Vagina (tissue), 2 donors: ENCODE measurements at regions of chr15 and their contacts with region 1.

Region 1: GRCh38 chr15:77944002-77944867 is 133.3 kb downstream of the TBC1D2B start:
- DNase-seq: no peak
- H3K4me3 ChIP-seq: peak overlapping the region; percentile 47 to 56
- H3K27ac ChIP-seq: peak overlapping the region; percentile 80
- H3K4me1 ChIP-seq: no peaks in the 10 kb centered on the region
- H3K27me3 ChIP-seq: no peaks in the 10 kb centered on the region
- CTCF ChIP-seq: no peak
- POLR2A ChIP-seq: no peak

Region 2: DNA sequence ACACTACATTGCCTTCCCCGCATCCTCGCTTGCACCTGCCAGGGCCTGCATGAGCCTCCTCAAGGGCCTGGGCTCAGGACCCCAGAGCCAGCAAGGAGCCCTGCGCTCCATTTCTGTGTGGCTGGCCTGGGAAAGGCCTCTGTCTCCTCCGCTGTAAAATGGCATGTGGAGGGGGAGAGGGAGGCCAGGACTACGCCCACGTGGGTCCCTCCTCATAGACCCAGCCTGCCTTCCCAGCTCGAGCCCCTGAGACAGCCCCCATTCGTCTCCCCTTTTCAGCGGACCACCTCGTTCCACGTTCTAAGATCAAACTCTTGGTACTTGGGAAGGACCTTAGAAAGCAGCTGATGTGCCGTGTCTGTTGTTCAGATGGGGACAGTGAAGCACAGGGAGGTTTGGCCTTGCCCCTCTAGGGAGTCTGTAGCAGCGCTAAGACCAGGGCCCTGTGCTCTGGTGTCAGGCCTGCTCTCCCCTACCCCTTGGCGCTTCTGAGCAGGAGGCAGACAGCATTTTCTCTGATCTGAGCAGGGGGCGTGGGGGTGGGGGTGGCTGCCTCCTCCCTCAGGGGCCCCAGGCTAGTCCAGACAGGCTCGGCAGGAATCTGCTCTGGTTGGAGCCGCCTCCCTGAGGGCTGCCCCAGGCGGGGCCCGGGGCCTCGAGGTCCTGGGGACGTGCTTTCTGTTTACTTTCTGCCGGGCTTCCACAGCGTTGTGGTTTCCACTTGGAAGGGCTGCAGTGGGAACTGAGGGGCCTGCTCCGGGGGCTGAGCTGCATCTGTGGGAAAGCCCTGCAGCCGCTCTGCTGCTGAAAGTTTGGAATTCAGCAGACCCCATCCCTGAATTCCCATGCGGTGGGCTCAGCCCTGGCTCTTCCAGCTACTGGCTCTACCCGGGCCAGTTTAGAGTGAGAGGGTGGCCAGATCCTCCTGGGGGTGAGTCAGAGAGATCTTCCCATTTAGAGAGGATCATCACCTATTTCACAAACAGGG is 417.1 kb before region 1 on chr15:
- intact Hi-C with region 1: no loop called
- DNase-seq: no peak
- H3K4me3 ChIP-seq: no peak overlapping the region
- H3K27ac ChIP-seq: peak overlapping the region; percentile 60
- H3K4me1 ChIP-seq: peaks cover 26% of the 10 kb centered on the region
- H3K27me3 ChIP-seq: no peaks in the 10 kb centered on the region
- CTCF ChIP-seq: no peak
- POLR2A ChIP-seq: no peak

Region 3: GRCh38 chr15:78739996-78740903 is 796.0 kb after region 1 on chr15:
- intact Hi-C with region 1: loop called (anchors 10 kb)
- DNase-seq: peak in 1 of 2 donors; percentile 65
- H3K4me3 ChIP-seq: no peak overlapping the region
- H3K27ac ChIP-seq: no peak overlapping the region
- H3K4me1 ChIP-seq: no peaks in the 10 kb centered on the region
- H3K27me3 ChIP-seq: no peaks in the 10 kb centered on the region
- CTCF ChIP-seq: no peak
- POLR2A ChIP-seq: no peak